ENCODE measurements at regions of chr9 and their contacts with region 1.

Region 1: DNA sequence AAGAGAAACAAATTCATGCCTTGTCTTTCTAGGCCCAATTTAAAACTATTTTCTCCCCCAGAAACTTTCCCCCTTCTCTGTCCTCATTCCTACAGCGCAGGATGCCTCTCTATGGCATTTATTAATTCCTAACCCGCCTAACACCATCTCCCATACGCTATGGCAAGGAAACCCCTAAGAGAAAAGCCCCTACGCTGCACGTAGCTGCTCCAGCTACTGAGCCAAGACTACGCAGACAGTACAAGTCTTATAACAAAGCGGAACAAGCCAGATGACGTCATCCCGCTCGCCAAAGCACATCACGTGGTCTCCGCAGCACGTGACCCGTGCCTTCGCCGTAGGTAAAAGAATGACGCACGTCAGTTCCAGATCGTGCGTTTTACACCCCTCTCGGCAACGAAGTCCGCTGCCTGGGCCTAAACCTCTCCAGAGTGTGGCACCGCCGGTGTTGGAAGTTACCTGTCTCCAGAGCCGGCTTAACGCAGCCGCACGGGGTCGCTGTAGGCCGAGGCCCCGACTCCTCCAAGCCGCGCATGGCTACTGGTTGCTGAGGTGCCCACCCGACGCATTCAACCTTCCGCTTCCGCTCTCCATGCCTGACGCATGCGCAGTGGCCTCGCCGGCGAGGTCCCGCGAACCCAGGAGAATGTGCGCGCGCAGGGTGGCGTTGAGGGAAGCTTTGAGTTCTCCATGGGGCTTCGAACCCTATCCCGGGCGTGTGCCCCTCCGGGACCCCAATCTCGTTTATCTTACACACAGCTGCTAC is at the start of gene TRMO:
- DNase-seq: peak; percentile 98
- H3K4me3 ChIP-seq: peak within 1 kb of the TSS; percentile 81
- H3K27ac ChIP-seq: peak within 1 kb of the TSS; percentile 97
- H3K27me3 ChIP-seq: peaks cover 9% of the 10 kb centered on the region
- CTCF ChIP-seq: peak; percentile 75
- polyA plus RNA-seq, gene TRMO: 11.1 and 12.6 TPM in 2 replicates

Region 2: GRCh38 chr9:97459099-97459725 is 462.9 kb before region 1 on chr9:
- CTCF ChIA-PET with region 1: no interaction called
- POLR2A ChIA-PET with region 1: no interaction called
- DNase-seq: no peak
- H3K4me3 ChIP-seq: no peak overlapping the region
- H3K27ac ChIP-seq: no peak overlapping the region
- H3K27me3 ChIP-seq: no peaks in the 10 kb centered on the region
- CTCF ChIP-seq: no peak

Region 3: DNA sequence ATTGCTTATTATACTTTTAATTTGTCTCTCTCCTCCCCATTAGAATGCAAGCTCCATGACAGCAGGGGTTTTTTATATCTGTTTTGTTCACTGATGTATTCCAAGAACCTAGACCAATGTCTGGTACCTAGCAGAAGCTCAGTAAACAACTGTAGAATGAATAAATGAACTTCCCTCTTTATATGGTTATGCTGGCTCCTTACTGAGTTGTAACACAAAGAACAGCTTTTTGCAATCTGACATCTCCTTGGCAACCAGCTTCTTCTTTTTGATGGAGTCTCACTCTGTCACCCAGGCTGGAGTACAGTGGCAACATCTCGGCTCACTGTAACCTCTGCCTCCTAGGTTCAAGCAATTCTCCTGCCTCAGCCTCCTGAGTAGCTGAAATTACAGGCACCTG is 13.4 kb before region 1 on chr9:
- CTCF ChIA-PET with region 1: interaction called, 15 read pairs
- POLR2A ChIA-PET with region 1: interaction called, 3 read pairs
- DNase-seq: no peak
- H3K4me3 ChIP-seq: no peak overlapping the region
- H3K27ac ChIP-seq: no peak overlapping the region
- H3K27me3 ChIP-seq: no peaks in the 10 kb centered on the region
- CTCF ChIP-seq: no peak

Region 4: DNA sequence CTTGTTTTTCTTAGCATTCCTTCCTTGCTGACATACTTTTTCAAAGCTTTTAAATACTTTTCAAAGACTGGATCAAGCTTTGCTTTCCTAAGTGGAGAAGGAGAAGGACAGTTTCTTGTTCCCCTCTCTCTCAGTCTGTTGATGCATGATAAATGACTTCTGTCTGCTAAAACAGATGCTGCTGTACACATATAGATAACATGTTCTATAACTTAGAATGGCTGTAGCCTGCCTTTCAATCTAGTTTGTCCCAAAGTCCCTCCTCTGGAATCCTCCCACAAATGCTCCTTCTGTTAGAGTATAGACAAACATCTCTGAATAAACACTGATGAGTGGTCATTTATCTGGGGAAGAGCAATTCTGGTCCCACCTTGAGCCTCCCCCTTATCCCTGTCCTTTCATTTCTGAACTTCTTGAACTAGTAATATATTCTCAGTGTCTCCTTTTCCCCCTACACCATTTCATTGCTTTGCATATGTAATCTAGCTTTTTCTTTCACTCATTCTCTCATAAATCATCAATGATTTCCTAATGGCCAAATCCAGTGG is 21.2 kb after region 1 on chr9:
- CTCF ChIA-PET with region 1: interaction called, 18 read pairs
- POLR2A ChIA-PET with region 1: interaction called, 3 read pairs
- DNase-seq: no peak
- H3K4me3 ChIP-seq: no peak overlapping the region
- H3K27ac ChIP-seq: no peak overlapping the region
- H3K27me3 ChIP-seq: peaks cover 24% of the 10 kb centered on the region
- CTCF ChIP-seq: no peak

Region 5: GRCh38 chr9:97982683-97983588 is 60.8 kb after region 1 on chr9 and contains the start of gene ANP32B:
- CTCF ChIA-PET with region 1: interaction called, 40 read pairs
- POLR2A ChIA-PET with region 1: interaction called, 6 read pairs
- DNase-seq: peak; percentile 67
- H3K4me3 ChIP-seq: peak within 1 kb of the TSS; percentile 78
- H3K27ac ChIP-seq: peak within 1 kb of the TSS; percentile 84
- H3K27me3 ChIP-seq: no peaks in the 10 kb centered on the region
- CTCF ChIP-seq: peak; percentile 73
- polyA plus RNA-seq, gene ANP32B: 53.3 and 59.0 TPM in 2 replicates

Region 6: GRCh38 chr9:98002808-98003207 is 80.7 kb after region 1 on chr9:
- CTCF ChIA-PET with region 1: interaction called, 10 read pairs
- POLR2A ChIA-PET with region 1: interaction called, 3 read pairs
- DNase-seq: no peak
- H3K4me3 ChIP-seq: no peak overlapping the region
- H3K27ac ChIP-seq: no peak overlapping the region
- H3K27me3 ChIP-seq: no peaks in the 10 kb centered on the region
- CTCF ChIP-seq: no peak

Region 7: GRCh38 chr9:98056269-98057137 is 134.4 kb after region 1 on chr9 and contains the start of gene NANS:
- CTCF ChIA-PET with region 1: interaction called, 22 read pairs
- POLR2A ChIA-PET with region 1: interaction called, 3 read pairs
- DNase-seq: peak; percentile 85
- H3K4me3 ChIP-seq: peak within 1 kb of the TSS; percentile 90
- H3K27ac ChIP-seq: peak within 1 kb of the TSS; percentile 86
- H3K27me3 ChIP-seq: no peaks in the 10 kb centered on the region
- CTCF ChIP-seq: peak; percentile 21
- polyA plus RNA-seq, gene NANS: 111 and 122 TPM in 2 replicates